Transverse colon (tissue), 4 donors: ENCODE measurements at regions of chr16 and their contacts with region 1.

Region 1: DNA sequence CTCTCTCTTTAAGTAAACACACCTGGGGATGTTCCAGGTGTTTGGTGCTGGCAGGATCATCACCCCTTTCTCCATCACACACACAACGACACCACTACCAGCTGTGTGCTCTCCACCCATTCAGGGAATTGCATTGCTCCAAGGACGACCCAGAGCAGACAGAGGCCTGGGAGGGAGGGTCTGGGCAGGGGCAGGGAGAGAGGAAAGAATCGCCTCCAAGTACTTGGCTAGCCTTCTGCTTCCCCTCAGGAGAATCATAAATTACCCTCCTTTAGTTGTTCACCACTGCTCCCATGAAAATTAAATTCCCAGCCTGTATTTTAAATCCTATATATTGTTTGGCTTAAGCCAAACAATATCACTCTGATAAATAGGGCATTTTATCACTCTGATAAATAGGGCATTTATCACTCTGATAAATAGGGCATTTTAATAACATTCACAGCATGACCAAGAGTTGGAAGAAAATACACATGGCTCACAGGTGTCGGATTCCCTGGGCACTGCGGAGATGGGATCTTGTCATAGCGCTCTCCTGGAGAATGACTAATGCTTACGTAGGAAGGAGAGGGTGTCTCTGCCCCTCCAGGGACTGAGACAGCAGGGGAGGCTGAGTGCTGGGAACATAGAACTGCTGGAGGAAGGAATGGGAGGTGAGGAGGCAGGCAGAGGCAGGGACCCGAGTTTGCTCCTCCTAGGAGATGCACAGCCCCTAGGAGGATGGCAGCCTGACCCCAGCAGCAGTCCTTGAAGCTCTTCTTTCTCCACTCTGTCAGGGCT is 673.6 kb downstream of the HS3ST4 start:
- DNase-seq: no peak
- H3K4me3 ChIP-seq: no peak overlapping the region
- H3K27ac ChIP-seq: no peak overlapping the region
- H3K4me1 ChIP-seq: no peaks in the 10 kb centered on the region
- H3K27me3 ChIP-seq: no peaks in the 10 kb centered on the region
- CTCF ChIP-seq: no peak
- EP300 ChIP-seq: no peak
- POLR2A ChIP-seq: no peak

Region 2: DNA sequence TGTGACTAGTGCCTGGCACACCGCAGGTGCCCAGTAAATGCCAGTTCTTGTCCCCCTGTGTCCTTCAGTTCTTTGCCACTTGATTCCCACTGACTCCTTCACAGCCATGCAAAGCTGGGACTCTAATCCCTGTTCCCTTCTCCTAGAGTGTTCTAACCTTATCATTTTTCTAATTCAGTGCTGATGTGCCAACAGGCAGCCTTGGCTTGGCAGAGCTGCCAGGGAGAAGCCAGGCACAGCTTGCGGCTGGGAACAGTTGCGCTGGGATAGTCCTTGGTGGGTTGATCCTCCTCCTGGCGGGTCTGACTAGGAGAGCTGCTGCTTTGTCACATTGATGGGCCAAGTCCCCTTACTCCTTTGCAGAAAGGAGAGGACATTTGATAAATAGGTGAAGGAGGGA is 19.4 kb before region 1 on chr16:
- in situ Hi-C with region 1: no loop called
- intact Hi-C with region 1: loop called (anchors 2 kb)
- DNase-seq: no peak
- H3K4me3 ChIP-seq: no peak overlapping the region
- H3K27ac ChIP-seq: no peak overlapping the region
- H3K4me1 ChIP-seq: no peaks in the 10 kb centered on the region
- H3K27me3 ChIP-seq: no peaks in the 10 kb centered on the region
- CTCF ChIP-seq: no peak
- EP300 ChIP-seq: no peak
- POLR2A ChIP-seq: no peak